Activated CD8-positive, alpha-beta T cell treated with anti-CD3 and anti-CD28 coated beads for 36 hours (primary cell): ENCODE measurements at regions of chr1 and their contacts with region 1.

Region 1: DNA sequence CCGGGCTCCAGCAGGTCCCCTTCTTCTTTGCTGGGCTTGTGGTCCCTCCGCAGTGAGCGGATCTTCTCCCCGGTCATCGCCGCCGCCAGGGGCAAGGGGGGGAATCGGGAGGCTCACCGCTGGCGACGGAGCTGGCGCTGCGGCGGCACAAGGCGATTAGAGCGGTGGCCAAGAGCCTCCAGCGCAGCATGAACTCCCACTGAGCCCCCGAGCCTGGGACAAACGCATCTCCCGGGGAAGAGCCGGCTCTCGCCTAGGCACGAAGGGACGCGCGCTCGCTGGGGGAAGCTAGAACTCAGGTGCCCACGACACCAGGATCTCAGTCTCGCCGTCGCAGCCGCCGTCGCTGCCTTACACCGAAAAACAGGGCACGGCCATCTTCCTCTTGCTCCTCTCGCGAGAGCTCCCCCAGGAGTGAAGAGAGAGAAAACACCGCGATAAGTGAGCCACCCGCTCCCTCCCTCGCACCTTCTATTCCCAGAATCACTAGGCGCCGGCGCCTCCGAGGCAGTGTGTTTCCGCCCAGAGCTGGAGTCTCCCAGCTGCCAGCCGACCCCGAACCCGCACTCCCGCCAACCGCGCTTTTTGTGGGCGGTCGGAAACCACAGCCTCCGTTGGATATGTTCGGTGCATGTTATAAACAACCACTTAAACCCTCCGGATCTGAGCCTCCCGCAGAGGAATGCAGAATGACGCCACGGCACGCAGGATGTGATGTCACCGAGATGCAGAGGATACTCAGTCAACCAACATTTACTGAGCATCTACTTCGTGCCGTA is at the start of gene ANKRD13C:
- DNase-seq: peak; percentile 96
- ATAC-seq: peak; percentile 94
- H3K4me3 Mint-ChIP-seq: peak within 1 kb of the TSS; percentile 81
- H3K27ac Mint-ChIP-seq: peak within 1 kb of the TSS; percentile 99
- H3K4me1 Mint-ChIP-seq: peaks cover 35% of the 10 kb centered on the region
- H3K27me3 Mint-ChIP-seq: no peaks in the 10 kb centered on the region
- CTCF ChIP-seq: no peak
- total RNA-seq, gene ANKRD13C: 15.1 to 16.9 TPM

Region 2: GRCh38 chr1:70410604-70411359 is 56.3 kb after region 1 on chr1 and contains the start of gene CTH:
- CTCF ChIA-PET with region 1: interaction called, 24 read pairs
- POLR2A ChIA-PET with region 1: interaction called, 47 read pairs
- intact Hi-C with region 1: loop called (anchors 2 kb)
- DNase-seq: peak; percentile 97
- ATAC-seq: peak; percentile 95
- H3K4me3 Mint-ChIP-seq: peak within 1 kb of the TSS; percentile 99
- H3K27ac Mint-ChIP-seq: peak within 1 kb of the TSS; percentile 94
- H3K4me1 Mint-ChIP-seq: peaks cover 15% of the 10 kb centered on the region
- H3K27me3 Mint-ChIP-seq: peaks cover 2% of the 10 kb centered on the region
- CTCF ChIP-seq: no peak
- total RNA-seq, gene CTH: 34.5 to 35.0 TPM